ENCODE measurements at regions of chr17 and their contacts with region 1.

Region 1: DNA sequence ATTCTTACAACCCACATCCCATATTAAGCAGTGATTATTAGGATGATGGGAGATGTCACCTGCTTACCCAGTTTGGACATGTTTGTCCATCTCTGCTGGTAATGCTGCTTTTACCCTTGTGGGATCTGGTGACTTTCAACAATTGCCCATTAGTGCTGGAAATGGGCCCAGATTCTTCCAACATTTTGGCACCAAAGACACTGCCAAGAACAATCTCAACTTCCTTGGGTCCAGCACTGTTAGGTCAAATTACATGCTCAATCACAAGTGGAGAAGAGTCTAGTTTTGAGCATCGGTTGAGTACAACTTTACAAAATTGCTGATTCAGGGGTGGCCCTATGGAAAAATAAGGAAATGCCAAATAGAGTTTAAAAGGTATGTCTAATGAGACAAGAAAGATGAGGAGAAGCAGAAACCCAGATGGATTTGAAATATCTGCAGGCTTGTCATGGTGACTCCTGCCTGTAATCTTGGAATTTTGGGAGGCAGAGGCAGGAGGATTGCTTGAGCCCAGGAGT is 13.0 kb upstream of the ZFP3 start:
- DNase-seq: no peak
- H3K4me3 Mint-ChIP-seq: no peak overlapping the region
- H3K27ac Mint-ChIP-seq: no peak overlapping the region
- H3K4me1 Mint-ChIP-seq: peaks cover 4% of the 10 kb centered on the region
- H3K27me3 Mint-ChIP-seq: peaks cover 8% of the 10 kb centered on the region

Region 2: DNA sequence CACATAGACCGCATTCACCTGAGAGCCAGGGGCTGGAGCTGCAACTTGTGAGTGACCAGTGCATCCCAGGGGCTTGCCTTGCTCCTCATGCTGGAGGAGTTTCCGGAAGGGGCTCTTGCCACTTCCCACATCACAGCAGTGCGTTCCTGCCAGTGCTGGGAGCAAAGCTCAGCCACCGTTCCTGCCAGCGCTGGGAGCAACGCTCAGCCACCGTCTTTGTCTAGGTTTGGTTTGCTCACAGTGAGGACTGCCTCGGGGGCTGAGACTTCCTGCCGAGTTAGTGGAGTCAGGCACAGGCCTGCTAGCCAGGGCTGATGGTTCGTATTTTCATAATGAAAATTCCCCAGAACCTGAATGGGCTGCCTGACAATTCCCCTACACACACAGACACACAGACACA is 157.0 kb before region 1 on chr17:
- intact Hi-C with region 1: loop called (anchors 1 kb)
- DNase-seq: no peak
- H3K4me3 Mint-ChIP-seq: no peak overlapping the region
- H3K27ac Mint-ChIP-seq: no peak overlapping the region
- H3K4me1 Mint-ChIP-seq: peaks cover 4% of the 10 kb centered on the region
- H3K27me3 Mint-ChIP-seq: peaks cover 3% of the 10 kb centered on the region

Region 3: DNA sequence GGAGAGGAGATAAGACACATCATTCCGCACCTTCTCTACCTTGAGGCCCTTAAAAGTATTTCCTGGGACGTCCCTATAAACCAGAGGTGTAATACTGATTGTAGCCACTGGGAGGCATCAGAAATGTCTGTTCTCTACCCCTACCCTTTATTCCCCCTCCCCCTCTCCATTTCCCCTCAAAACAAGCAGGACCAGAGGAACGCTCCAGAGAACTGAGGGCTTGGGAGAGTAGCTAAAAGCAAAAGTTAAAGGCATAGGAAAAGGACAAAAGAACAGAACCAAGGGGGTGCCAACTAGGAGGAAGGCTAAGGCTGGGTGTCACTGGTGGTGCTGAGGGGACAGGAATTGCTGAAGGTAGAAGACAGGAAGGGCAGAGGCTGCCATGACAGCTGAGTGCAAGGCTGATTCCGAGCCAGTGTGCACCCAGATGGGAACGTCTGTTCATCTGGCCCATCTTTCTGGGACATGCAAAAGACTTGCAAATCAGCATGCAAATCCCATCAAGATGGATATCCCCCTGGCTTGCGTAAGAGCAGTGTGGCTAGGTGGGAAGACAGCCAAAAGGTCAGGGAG is 84.6 kb before region 1 on chr17:
- intact Hi-C with region 1: loop called (anchors 1 kb)
- DNase-seq: peak; percentile 44
- H3K4me3 Mint-ChIP-seq: no peak overlapping the region
- H3K27ac Mint-ChIP-seq: peak overlapping the region; percentile 54
- H3K4me1 Mint-ChIP-seq: peaks cover 20% of the 10 kb centered on the region
- H3K27me3 Mint-ChIP-seq: no peaks in the 10 kb centered on the region

Region 4: GRCh38 chr17:5031365-5032082 is 33.8 kb before region 1 on chr17:
- intact Hi-C with region 1: loop called (anchors 1 kb)
- DNase-seq: peak; percentile 71
- H3K4me3 Mint-ChIP-seq: peak overlapping the region; percentile 81
- H3K27ac Mint-ChIP-seq: peak overlapping the region; percentile 96
- H3K4me1 Mint-ChIP-seq: peaks cover 14% of the 10 kb centered on the region
- H3K27me3 Mint-ChIP-seq: no peaks in the 10 kb centered on the region

Measured in activated T-helper 2 cell treated with anti-CD3 and anti-CD28 coated beads, Interferon-gamma antibody, Interleukin-2, Interleukin-4, amounts not matched to agents 10 μg/mL and 5 μg/mL and 100 μg/mL, durations not matched to agents 14 hours and 24 hours and 36 hours (primary cell).